CD4-positive, alpha-beta T cell (primary cell): ENCODE measurements at regions of chr13 and their contacts with region 1.

Region 1: GRCh38 chr13:27276188-27276587 is 5.6 kb downstream of the RASL11A start:
- DNase-seq: no peak
- ATAC-seq: no peak
- H3K4me3 ChIP-seq: no peak overlapping the region
- H3K4me3 Mint-ChIP-seq: no peak overlapping the region
- H3K27ac ChIP-seq: no peak overlapping the region
- H3K27ac Mint-ChIP-seq: no peak overlapping the region
- H3K4me1 ChIP-seq: peaks cover 7% of the 10 kb centered on the region
- H3K4me1 Mint-ChIP-seq: peaks cover 7% of the 10 kb centered on the region
- H3K27me3 ChIP-seq: peaks cover 5 to 8% of the 10 kb centered on the region in 2 experiments
- H3K27me3 Mint-ChIP-seq: peaks cover 26% of the 10 kb centered on the region
- CTCF ChIP-seq: no peak

Region 2: DNA sequence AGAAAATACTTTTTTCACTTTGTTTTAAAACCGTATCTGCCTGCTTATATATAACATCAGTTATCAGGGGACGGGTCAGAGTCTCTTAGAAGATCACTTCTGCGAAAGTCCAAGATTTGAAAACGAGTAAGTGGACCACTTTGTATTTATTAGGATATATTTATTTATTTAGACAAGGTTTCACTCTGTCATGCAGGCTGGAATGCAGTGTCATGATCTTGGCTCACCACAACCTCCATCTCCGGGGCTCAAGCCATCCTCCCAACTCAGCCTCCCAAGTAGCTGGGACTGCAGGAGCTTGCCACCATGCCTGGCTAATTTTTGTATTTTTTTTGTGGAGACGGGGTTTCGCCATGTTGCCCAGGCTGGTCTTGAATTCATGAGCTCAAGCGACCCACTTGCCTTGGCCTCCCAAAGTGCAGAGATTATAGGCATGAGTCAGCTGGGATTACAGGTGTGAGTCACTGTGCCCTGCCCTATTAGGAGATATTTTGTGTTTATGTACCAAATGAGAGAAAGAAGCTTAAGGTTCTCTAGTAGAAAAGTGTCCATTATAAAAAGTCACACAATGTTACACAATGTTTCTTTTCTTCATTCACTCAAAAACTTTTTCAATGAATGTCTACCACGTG is 33.9 kb after region 1 on chr13:
- CTCF ChIA-PET with region 1: interaction called, 3 read pairs
- POLR2A ChIA-PET with region 1: no interaction called
- intact Hi-C with region 1: loop called in 1 of 2 experiments (anchors 5 kb)
- DNase-seq: no peak
- ATAC-seq: no peak
- H3K4me3 ChIP-seq: no peak overlapping the region
- H3K4me3 Mint-ChIP-seq: no peak overlapping the region
- H3K27ac ChIP-seq: no peak overlapping the region
- H3K27ac Mint-ChIP-seq: no peak overlapping the region
- H3K4me1 ChIP-seq: peaks cover 7% of the 10 kb centered on the region
- H3K4me1 Mint-ChIP-seq: peaks cover 22% of the 10 kb centered on the region
- H3K27me3 ChIP-seq: no peaks in the 10 kb centered on the region
- H3K27me3 Mint-ChIP-seq: no peaks in the 10 kb centered on the region
- CTCF ChIP-seq: no peak